ENCODE measurements at regions of chr19 and their contacts with region 1.

Region 1: GRCh38 chr19:33771384-33772101 is 25.1 kb upstream of the KCTD15 start:
- DNase-seq: peak; percentile 36
- H3K4me3 ChIP-seq: no peak overlapping the region
- H3K27ac ChIP-seq: no peak overlapping the region
- H3K4me1 ChIP-seq: no peaks in the 10 kb centered on the region
- H3K27me3 ChIP-seq: no peaks in the 10 kb centered on the region
- CTCF ChIP-seq: peak; percentile 77 to 86

Region 2: DNA sequence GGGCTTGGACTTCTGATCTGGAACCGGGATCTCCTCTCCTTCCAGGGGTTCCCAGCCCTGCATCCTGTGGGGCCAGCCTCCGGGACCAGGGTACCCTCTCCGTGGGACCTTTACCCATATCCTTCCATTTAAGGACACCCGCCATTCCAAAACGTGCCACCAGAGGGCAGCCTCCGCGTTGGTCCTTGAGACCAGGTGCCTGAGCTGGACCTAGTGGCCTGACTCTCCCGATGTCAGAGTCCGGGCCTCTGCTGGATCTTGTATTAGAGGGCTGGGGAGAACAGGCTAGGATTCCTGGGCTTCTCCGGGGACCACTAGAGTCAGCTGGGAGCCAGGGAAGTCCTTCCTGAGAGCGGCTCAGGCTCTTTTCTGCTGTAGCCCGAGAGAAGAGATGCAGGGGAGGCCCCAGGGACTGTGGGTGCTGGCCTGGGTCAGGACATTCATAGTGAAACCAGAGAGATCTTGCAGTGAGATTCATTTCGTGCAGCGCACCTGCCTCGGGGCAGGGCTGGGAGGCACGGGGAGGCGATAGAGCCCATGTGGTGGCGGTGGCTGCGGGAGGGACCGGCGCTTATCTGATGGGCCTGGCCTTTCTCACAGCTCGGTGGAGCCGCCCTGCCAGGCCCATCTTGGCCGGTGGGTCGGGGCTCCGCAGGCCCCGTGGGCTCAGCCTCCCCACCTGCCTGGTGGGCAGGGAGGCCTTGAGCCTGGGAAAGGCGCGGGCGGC is 536.1 kb before region 1 on chr19:
- CTCF ChIA-PET with region 1: no interaction called
- dilution Hi-C with region 1: loop called (anchors 10 kb)
- in situ Hi-C with region 1: loop called (anchors 10 to 25 kb)
- intact Hi-C with region 1: loop called (anchors 2 kb)
- DNase-seq: peak; percentile 30
- H3K4me3 ChIP-seq: no peak overlapping the region
- H3K27ac ChIP-seq: no peak overlapping the region
- H3K4me1 ChIP-seq: no peaks in the 10 kb centered on the region
- H3K27me3 ChIP-seq: no peaks in the 10 kb centered on the region
- CTCF ChIP-seq: peak; percentile 81 to 94

Region 3: GRCh38 chr19:33416307-33417215 is 355.0 kb before region 1 on chr19:
- CTCF ChIA-PET with region 1: interaction called, 7 read pairs
- dilution Hi-C with region 1: loop called (anchors 5 kb)
- in situ Hi-C with region 1: no loop called
- intact Hi-C with region 1: loop called (anchors 1 kb)
- DNase-seq: peak; percentile 44
- H3K4me3 ChIP-seq: peak overlapping the region in 1 of 3 experiments; percentile 17
- H3K27ac ChIP-seq: no peak overlapping the region
- H3K4me1 ChIP-seq: peaks cover 5% of the 10 kb centered on the region
- H3K27me3 ChIP-seq: no peaks in the 10 kb centered on the region
- CTCF ChIP-seq: peak; percentile 72 to 73

Region 4: DNA sequence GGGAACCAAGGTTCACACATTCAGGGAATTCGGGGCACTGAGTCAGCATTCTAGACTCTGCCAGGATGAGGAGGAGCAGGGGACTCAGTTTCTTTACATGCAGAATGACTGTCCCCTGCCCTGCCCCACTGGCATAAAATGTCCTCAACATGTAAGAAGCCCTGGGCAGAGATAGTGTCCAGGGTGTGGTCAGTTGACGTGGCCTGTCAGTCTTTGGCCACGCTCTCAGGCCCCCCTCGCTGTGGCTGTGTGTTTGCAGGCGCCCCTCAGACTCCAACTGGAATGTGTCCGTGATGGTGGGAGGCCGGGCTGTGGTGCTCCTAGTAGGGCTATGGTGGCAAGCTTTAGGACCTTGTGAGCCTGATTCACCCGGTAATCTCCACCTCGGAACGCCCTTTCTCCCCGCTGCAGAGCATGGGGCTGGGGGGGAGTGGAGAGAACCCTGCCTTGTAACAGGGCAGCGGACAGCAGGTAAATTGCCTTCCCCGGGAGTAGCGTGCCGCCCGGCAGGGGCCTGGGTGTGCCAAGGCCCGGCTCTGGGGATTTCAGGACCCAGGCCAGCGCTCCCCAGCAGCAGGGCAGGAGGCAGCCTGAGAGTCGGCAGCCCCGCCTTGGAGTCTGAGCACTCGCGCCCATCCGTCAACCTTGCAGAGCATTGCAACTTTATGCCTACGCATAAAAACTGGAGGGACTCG is 87.6 kb before region 1 on chr19:
- CTCF ChIA-PET with region 1: no interaction called
- dilution Hi-C with region 1: loop called (anchors 5 kb)
- in situ Hi-C with region 1: no loop called
- intact Hi-C with region 1: no loop called
- DNase-seq: peak; percentile 55
- H3K4me3 ChIP-seq: no peak overlapping the region
- H3K27ac ChIP-seq: no peak overlapping the region
- H3K4me1 ChIP-seq: no peaks in the 10 kb centered on the region
- H3K27me3 ChIP-seq: peaks cover 4% of the 10 kb centered on the region
- CTCF ChIP-seq: no peak

Region 5: DNA sequence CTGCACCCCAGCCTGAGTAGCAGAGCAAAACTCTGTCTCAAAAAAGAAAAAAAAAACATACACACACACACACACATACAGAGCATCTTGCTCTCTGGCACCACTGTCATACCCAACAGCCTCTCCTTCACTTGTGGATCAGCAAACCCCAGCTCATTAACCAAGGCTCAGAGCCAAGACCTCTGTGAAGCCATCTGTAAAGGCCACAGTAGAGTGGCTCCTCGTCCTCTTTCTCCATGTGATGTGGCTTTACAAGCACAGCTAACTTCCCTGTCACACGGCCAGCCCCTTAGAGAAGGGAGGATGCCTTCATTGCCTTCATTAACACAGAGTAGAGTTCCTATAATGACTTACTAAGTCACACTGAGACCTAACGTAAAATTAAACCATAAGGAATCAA is 338.1 kb after region 1 on chr19:
- CTCF ChIA-PET with region 1: no interaction called
- dilution Hi-C with region 1: loop called (anchors 5 kb)
- in situ Hi-C with region 1: no loop called
- intact Hi-C with region 1: no loop called
- DNase-seq: no peak
- H3K4me3 ChIP-seq: no peak overlapping the region
- H3K27ac ChIP-seq: no peak overlapping the region
- H3K4me1 ChIP-seq: no peaks in the 10 kb centered on the region
- H3K27me3 ChIP-seq: no peaks in the 10 kb centered on the region
- CTCF ChIP-seq: no peak

Measured in mammary epithelial cell (primary cell).